Thyroid gland (tissue), 4 donors: ENCODE measurements at regions of chr15 and their contacts with region 1.

Region 1: GRCh38 chr15:34101366-34102175 is at the starts of genes EMC7 and PGBD4:
- DNase-seq: peak; percentile 99
- H3K4me3 ChIP-seq: peak within 1 kb of the TSS; percentile 74 to 87 (median 76)
- H3K27ac ChIP-seq: peak within 1 kb of the TSS; percentile 44 to 84 (median 67)
- H3K4me1 ChIP-seq: peaks cover 7 to 12% of the 10 kb centered on the region in 2 donors
- H3K27me3 ChIP-seq: no peaks in the 10 kb centered on the region
- CTCF ChIP-seq: peak in 1 of 6 experiments; percentile 32
- POLR2A ChIP-seq: peak in 1 of 2 donors; percentile 84
- total RNA-seq, gene EMC7: 40.9 to 54.3 (median 50.5) TPM
- total RNA-seq, gene PGBD4: 1.0 to 1.3 (median 1.2) TPM

Region 2: GRCh38 chr15:33975022-33975565 is 126.5 kb before region 1 on chr15:
- intact Hi-C with region 1: no loop called
- DNase-seq: no peak
- H3K4me3 ChIP-seq: no peak overlapping the region
- H3K27ac ChIP-seq: no peak overlapping the region
- H3K4me1 ChIP-seq: no peaks in the 10 kb centered on the region
- H3K27me3 ChIP-seq: no peaks in the 10 kb centered on the region
- CTCF ChIP-seq: no peak
- POLR2A ChIP-seq: no peak

Region 3: DNA sequence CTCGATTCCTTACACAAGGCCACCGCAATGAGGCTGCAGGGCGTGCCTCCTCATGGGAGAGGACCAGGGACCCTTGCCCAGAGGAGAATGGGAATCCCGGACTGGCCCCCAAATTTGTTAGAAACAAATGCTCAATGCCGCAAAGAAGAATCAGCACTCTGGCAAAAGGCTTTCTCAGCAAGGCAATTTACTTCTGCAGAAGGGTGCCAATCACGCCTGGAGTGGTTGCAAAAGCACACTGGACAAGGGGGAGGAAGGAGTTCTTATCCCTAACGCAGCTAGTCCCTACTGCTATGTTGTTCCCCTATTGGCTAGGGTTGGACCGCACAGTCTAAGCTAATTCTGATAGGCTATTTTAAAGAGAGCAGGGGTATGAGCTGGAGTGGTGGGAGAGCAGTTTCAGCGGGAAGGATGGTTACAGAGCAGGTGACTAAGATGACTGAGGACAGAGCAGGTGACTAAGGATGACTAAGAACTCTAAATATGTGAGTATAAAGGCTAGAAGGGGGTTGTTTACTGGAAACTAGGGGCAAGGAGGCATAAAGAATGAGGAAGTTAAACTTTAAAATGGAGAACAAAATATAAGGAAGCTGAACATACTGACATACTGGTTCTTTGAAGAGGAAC is 59.9 kb after region 1 on chr15:
- intact Hi-C with region 1: no loop called
- DNase-seq: no peak
- H3K4me3 ChIP-seq: no peak overlapping the region
- H3K27ac ChIP-seq: no peak overlapping the region
- H3K4me1 ChIP-seq: no peaks in the 10 kb centered on the region
- H3K27me3 ChIP-seq: no peaks in the 10 kb centered on the region
- CTCF ChIP-seq: no peak
- POLR2A ChIP-seq: no peak

Region 4: DNA sequence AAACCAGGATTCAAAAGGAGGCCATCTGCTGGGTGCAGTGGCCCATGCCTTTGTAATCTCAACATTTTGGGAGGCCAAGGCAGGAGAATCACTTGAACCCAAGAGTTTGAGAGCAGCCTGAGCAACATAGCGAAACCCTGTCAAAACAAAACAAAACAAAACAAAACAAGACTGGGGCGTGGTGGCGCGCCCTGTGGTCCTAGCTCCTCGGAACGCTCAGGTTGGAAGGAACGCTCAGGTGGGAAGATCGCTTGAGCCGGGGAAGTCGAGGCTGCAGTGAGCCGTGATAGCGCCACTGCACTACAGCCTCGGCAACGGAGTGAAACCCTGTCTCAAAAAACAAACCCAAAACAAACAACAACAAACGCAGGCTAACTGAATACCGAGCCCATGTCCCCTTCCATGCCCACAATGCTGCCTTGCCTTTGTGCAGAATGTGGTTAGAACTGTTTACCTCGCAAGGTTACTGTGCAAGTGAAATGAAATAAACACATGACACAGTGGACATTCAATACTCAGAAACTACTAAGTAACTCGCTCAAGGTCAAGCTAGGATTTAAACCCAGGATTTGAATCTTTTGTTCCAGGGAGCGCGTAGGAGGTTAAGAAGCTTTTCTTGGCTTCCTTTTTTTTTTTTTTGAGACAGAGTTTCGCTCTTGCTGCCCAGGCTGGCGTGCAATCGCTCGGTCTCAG is 122.5 kb after region 1 on chr15:
- intact Hi-C with region 1: loop called (anchors 5 kb)
- DNase-seq: peak; percentile 4 to 20
- H3K4me3 ChIP-seq: peak overlapping the region in 2 of 3 donors; percentile 75 to 84
- H3K27ac ChIP-seq: peak overlapping the region; percentile 73 to 86 (median 83)
- H3K4me1 ChIP-seq: peaks cover 0 to 16% of the 10 kb centered on the region in 2 donors
- H3K27me3 ChIP-seq: no peaks in the 10 kb centered on the region
- CTCF ChIP-seq: no peak
- POLR2A ChIP-seq: no peak